ENCODE measurements at regions of chr12 and their contacts with region 1.

Region 1: DNA sequence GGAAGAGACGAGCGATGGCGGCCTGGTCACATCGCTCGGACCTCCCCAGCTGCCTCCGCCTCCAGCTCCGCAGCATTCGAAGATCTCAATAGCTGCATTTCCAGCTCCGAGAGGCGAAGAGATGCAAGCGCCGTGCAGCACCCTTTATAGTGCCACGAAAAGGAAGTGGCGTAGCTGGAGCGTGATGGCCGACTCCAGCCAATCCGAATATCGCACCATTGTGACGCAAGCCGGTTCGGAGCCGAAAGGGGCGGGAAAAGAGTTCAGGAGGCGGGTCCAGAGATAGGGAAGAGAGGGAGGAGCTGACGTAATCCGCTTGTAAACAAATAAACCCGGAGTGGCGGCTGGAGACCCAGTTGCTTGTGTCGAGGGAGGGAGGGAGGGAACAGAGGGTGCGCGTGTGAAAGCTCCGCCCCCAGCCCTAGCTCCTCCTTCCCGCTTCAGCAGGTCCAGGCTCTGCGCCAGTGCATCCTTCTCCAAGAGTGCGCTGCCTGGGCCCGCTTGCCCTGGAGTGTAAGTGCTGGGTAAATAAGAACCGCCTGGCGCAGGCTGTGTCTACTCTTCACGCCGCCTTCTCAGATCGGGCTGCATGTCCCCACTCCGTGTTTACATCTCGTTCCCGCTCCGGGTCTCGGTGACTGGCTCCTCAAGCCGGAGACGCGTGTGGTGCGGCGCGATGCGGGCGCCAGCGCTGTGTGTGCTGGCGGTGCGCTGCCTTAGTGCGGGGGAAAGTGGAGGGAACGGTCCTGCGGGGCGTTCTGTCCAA is at the start of gene BTG1:
- DNase-seq: peak; percentile 90 to 100 (median 100)
- ATAC-seq: peak; percentile 84
- H3K4me3 ChIP-seq: peak within 1 kb of the TSS; percentile 98
- H3K4me3 Mint-ChIP-seq: peak within 1 kb of the TSS; percentile 94 to 100 (median 98)
- H3K27ac ChIP-seq: peak within 1 kb of the TSS; percentile 91
- H3K27ac Mint-ChIP-seq: peak within 1 kb of the TSS; percentile 98 to 100 (median 99)
- H3K4me1 ChIP-seq: peaks cover 7 to 14% of the 10 kb centered on the region in 2 donors
- H3K4me1 Mint-ChIP-seq: peaks cover 18 to 34% (median 27%) of the 10 kb centered on the region in 7 donors
- H3K27me3 ChIP-seq: no peaks in the 10 kb centered on the region
- H3K27me3 Mint-ChIP-seq: peaks cover 0 to 4% (median 0%) of the 10 kb centered on the region in 5 donors
- total RNA-seq, gene BTG1: 188 to 1,246 (median 571) TPM

Region 2: GRCh38 chr12:91877022-91877421 is 268.9 kb before region 1 on chr12:
- CTCF ChIA-PET with region 1: interaction called, 15 read pairs
- POLR2A ChIA-PET with region 1: interaction called, 193 read pairs
- intact Hi-C with region 1: loop called (anchors 1 kb)
- DNase-seq: peak; percentile 51 to 97 (median 93)
- ATAC-seq: peak; percentile 94
- H3K4me3 ChIP-seq: peak overlapping the region; percentile 39
- H3K4me3 Mint-ChIP-seq: peak overlapping the region; percentile 77 to 88 (median 82)
- H3K27ac ChIP-seq: peak overlapping the region; percentile 92
- H3K27ac Mint-ChIP-seq: peak overlapping the region; percentile 95 to 100 (median 99)
- H3K4me1 ChIP-seq: peaks cover 59% of the 10 kb centered on the region in 2 donors
- H3K4me1 Mint-ChIP-seq: peaks cover 40 to 85% (median 80%) of the 10 kb centered on the region in 7 donors
- H3K27me3 ChIP-seq: no peaks in the 10 kb centered on the region
- H3K27me3 Mint-ChIP-seq: no peaks in the 10 kb centered on the region

Region 3: DNA sequence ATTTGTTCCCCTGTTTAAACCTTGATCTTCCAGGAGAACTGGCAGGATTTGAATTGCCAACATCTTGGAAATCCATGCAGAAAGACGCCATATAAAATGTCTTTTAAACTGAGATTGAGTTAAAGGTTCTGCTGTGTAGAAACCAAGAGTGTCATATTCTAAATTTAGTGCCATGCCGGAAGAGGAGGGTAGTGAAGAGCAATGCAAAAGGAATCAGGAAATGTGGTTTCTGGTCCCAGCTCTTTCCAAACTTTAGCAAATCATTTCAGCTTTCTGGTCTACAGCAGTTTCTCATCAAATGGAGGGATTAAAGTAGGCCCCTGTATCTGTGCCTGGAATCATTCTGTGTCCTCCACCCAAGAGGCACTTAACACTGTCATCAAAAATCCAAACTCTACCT is 85.9 kb before region 1 on chr12:
- CTCF ChIA-PET with region 1: interaction called, 4 read pairs
- POLR2A ChIA-PET with region 1: interaction called, 43 read pairs
- intact Hi-C with region 1: no loop called
- DNase-seq: no peak
- ATAC-seq: no peak
- H3K4me3 ChIP-seq: no peak overlapping the region
- H3K4me3 Mint-ChIP-seq: peak overlapping the region in 8 of 10 donors; percentile 6 to 79 (median 46)
- H3K27ac ChIP-seq: no peak overlapping the region
- H3K27ac Mint-ChIP-seq: peak overlapping the region in 8 of 9 donors; percentile 19 to 98 (median 93)
- H3K4me1 ChIP-seq: peaks cover 10 to 53% of the 10 kb centered on the region in 2 donors
- H3K4me1 Mint-ChIP-seq: peaks cover 39 to 99% (median 94%) of the 10 kb centered on the region in 7 donors
- H3K27me3 ChIP-seq: no peaks in the 10 kb centered on the region
- H3K27me3 Mint-ChIP-seq: no peaks in the 10 kb centered on the region

Region 4: GRCh38 chr12:92208613-92209121 is 62.8 kb after region 1 on chr12:
- CTCF ChIA-PET with region 1: interaction called, 7 read pairs
- POLR2A ChIA-PET with region 1: interaction called, 224 read pairs
- intact Hi-C with region 1: loop called (anchors 1 kb)
- DNase-seq: peak in 7 of 9 donors; percentile 55 to 76 (median 63)
- ATAC-seq: peak; percentile 92
- H3K4me3 ChIP-seq: peak overlapping the region; percentile 29
- H3K4me3 Mint-ChIP-seq: peak overlapping the region; percentile 58 to 90 (median 76)
- H3K27ac ChIP-seq: peak overlapping the region; percentile 48
- H3K27ac Mint-ChIP-seq: peak overlapping the region; percentile 72 to 97 (median 95)
- H3K4me1 ChIP-seq: peaks cover 18 to 25% of the 10 kb centered on the region in 2 donors
- H3K4me1 Mint-ChIP-seq: peaks cover 19 to 55% (median 41%) of the 10 kb centered on the region in 7 donors
- H3K27me3 ChIP-seq: no peaks in the 10 kb centered on the region
- H3K27me3 Mint-ChIP-seq: no peaks in the 10 kb centered on the region

Region 5: DNA sequence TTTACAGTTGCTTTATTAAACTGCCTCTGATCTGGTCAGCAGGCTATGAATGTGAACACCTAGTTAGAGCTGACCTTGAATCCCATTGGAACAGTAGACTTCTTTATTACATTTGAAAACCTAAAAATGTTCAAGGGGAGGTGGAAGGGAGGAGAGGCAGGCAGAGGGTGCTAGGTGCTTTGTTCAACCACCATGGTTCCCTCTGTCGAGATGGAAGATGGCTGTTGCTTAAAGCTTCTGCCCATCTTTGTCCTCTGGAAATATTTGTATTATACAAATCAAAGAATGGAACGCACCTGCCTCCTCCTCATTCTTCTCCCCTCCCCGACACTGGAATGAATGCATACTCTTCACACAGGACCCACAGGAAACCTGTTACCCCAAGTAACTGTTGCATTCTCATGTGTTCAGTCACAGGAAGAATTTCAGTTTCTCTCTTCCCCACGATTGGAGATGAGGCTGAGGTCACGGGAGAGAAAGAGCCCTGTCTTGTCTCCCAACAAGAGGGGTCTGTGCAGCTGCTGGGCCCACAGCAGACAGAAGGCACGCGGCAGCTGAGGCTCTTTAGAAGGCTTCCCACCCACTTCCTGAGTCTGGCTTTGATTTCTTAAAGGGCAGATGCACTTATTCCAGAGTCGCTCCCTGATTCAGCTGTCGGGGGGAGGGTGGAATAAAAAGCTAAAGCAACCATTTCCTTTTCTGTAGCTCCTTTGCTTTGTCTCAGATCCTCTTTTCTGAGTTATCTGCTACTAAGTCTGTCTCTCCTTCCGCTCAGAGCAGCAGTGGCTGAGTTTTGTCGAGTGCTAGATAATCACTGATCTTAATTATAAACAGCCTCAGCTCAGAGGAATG is 217.6 kb after region 1 on chr12:
- CTCF ChIA-PET with region 1: no interaction called
- POLR2A ChIA-PET with region 1: interaction called, 140 read pairs
- intact Hi-C with region 1: loop called in 1 of 2 experiments (anchors 1 kb)
- DNase-seq: peak in 8 of 9 donors; percentile 23 to 75 (median 62)
- ATAC-seq: peak; percentile 65
- H3K4me3 ChIP-seq: peak overlapping the region; percentile 49
- H3K4me3 Mint-ChIP-seq: peak overlapping the region; percentile 68 to 90 (median 80)
- H3K27ac ChIP-seq: peak overlapping the region; percentile 69
- H3K27ac Mint-ChIP-seq: peak overlapping the region; percentile 92 to 99 (median 97)
- H3K4me1 ChIP-seq: peaks cover 35 to 67% of the 10 kb centered on the region in 2 donors
- H3K4me1 Mint-ChIP-seq: peaks cover 33 to 88% (median 76%) of the 10 kb centered on the region in 7 donors
- H3K27me3 ChIP-seq: no peaks in the 10 kb centered on the region
- H3K27me3 Mint-ChIP-seq: no peaks in the 10 kb centered on the region

Region 6: GRCh38 chr12:92593734-92594402 is 448.0 kb after region 1 on chr12:
- CTCF ChIA-PET with region 1: no interaction called
- POLR2A ChIA-PET with region 1: interaction called, 53 read pairs
- intact Hi-C with region 1: loop called (anchors 1 kb)
- DNase-seq: peak; percentile 51 to 97 (median 92)
- ATAC-seq: peak; percentile 95
- H3K4me3 ChIP-seq: peak overlapping the region; percentile 16
- H3K4me3 Mint-ChIP-seq: peak overlapping the region; percentile 22 to 83 (median 72)
- H3K27ac ChIP-seq: peak overlapping the region; percentile 86
- H3K27ac Mint-ChIP-seq: peak overlapping the region; percentile 90 to 100 (median 98)
- H3K4me1 ChIP-seq: peaks cover 27 to 30% of the 10 kb centered on the region in 2 donors
- H3K4me1 Mint-ChIP-seq: peaks cover 23 to 74% (median 44%) of the 10 kb centered on the region in 7 donors
- H3K27me3 ChIP-seq: no peaks in the 10 kb centered on the region
- H3K27me3 Mint-ChIP-seq: no peaks in the 10 kb centered on the region

Measured in naive thymus-derived CD4-positive, alpha-beta T cell (primary cell).